Natural killer cell (primary cell): ENCODE measurements at regions of chr7 and their contacts with region 1.

Region 1: DNA sequence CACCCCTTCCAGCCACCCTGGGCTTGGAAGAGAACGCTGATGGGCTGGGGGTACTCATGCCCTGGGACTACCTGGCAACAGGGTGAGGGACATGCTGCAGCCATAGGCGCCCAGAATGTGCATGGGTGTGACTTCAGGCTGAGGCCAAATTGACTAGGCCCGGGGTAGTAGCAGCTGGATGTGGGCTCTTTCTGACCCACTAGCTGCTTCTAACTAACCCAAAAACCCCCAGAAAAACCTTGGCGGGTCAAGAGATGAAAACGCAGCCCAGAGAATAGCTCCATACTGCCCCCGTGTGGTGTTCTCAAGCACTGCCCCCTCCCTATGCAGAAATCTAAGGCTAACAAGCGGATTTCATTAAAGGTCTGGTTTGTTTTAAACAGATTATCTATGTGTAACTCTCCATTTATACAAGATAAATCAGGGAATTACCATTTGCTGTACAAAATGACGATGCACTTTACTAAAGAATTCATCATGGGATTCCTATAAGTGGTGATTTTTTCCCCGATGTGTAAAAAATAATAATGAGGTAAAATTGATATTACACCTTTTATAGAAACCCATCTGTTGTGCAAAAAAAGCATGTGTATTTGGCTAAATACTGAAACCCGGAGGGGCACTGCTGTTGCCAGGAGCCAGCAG is 4.2 kb downstream of the SMARCD3 start:
- DNase-seq: peak; percentile 60 to 84
- ATAC-seq: peak; percentile 49 to 63 (median 55)
- H3K4me3 ChIP-seq: no peak overlapping the region
- H3K4me3 Mint-ChIP-seq: peak overlapping the region; percentile 79
- H3K27ac ChIP-seq: no peak overlapping the region
- H3K27ac Mint-ChIP-seq: peak overlapping the region; percentile 38 to 92
- H3K4me1 ChIP-seq: peaks cover 51% of the 10 kb centered on the region
- H3K4me1 Mint-ChIP-seq: peaks cover 25 to 44% of the 10 kb centered on the region in 2 donors
- H3K27me3 ChIP-seq: peaks cover 24% of the 10 kb centered on the region
- H3K27me3 Mint-ChIP-seq: peaks cover 0 to 23% of the 10 kb centered on the region in 2 donors
- CTCF ChIP-seq: peak; percentile 81

Region 2: DNA sequence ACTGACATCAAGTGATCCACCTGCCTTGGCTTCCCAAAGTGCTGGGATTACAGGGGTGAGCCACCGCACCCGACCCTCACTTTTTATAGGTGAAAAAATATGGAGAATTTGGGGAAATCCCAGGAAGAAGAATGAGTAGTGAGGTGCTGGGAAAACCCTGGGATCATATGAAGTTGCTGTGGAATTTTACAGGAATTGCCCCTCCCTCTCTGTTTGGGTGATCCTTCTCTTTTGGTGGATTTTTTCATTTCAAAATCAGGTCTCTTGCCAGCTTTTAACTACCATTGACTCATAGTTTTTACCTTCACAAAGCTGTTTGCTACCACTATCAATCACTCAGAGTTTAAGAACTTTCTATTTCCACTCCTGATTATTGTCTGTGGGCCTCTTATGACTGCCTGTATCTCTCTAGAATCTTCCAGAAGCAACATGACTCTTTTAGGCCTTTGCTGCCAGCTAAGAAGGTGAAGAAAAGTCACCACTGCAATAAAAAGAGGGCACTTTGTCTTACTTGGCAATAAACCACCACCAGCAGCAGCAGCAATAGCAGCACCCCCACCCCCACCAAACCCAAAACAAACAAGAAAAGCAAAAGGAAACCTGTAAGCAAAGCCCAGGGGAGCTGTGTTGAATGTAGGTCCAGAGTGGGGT is 797.9 kb before region 1 on chr7:
- intact Hi-C with region 1: no loop called
- DNase-seq: peak in 1 of 2 donors; percentile 28
- ATAC-seq: no peak
- H3K4me3 ChIP-seq: no peak overlapping the region
- H3K4me3 Mint-ChIP-seq: no peak overlapping the region
- H3K27ac ChIP-seq: no peak overlapping the region
- H3K27ac Mint-ChIP-seq: peak overlapping the region in 1 of 2 donors; percentile 8
- H3K4me1 ChIP-seq: peaks cover 50% of the 10 kb centered on the region
- H3K4me1 Mint-ChIP-seq: peaks cover 33 to 43% of the 10 kb centered on the region in 2 donors
- H3K27me3 ChIP-seq: no peaks in the 10 kb centered on the region
- H3K27me3 Mint-ChIP-seq: no peaks in the 10 kb centered on the region
- CTCF ChIP-seq: no peak

Region 3: DNA sequence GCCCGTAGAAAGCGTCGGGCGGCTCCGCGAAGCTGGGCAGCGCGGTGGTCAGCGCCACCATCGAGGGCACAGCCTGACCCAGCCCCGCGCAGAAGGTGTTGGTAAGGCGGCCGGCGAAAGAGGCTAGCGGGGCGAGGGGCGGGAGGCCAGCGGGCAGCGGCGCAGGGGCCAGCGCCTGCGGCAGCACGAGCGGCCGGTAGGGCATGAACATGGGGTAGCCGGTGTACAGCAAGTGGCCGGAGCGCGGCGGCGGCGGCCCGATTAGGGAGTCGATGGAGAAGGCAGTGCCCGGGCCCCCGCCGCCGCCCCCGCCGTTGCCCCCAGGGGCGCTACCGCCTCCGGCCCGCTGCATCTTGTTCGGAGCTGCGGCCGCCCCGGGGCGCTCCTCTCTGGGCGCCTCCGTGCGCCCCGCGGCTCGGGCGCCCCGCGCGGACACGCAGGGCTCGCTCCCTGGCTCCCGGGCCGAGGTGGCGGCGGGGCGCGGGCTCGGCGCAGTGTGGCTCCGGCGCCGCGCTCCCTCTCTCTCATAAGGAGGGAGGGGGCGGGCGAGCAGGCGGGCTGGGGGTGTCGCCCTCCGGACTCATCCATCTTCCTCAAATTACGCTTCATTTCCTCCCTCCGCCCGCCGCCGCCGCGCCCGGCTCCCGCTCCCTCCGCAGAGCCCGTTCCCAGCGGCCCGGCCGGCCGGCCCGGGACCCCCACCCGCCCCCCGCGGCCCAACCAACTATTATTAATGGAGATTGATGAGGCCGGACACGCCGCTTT is 76.9 kb before region 1 on chr7 and contains the start of gene GBX1:
- intact Hi-C with region 1: loop called (anchors 2 kb)
- DNase-seq: peak in 1 of 2 donors; percentile 53
- ATAC-seq: peak in 2 of 3 donors; percentile 49 to 62
- H3K4me3 ChIP-seq: no peak within 1 kb of the TSS
- H3K4me3 Mint-ChIP-seq: peak within 1 kb of the TSS; percentile 83
- H3K27ac ChIP-seq: no peak within 1 kb of the TSS
- H3K27ac Mint-ChIP-seq: peak within 1 kb of the TSS in 1 of 2 donors; percentile 14
- H3K4me1 ChIP-seq: peaks cover 13% of the 10 kb centered on the region
- H3K4me1 Mint-ChIP-seq: peaks cover 3 to 11% of the 10 kb centered on the region in 2 donors
- H3K27me3 ChIP-seq: peaks cover 40% of the 10 kb centered on the region
- H3K27me3 Mint-ChIP-seq: peaks cover 31 to 41% of the 10 kb centered on the region in 2 donors
- CTCF ChIP-seq: no peak
- total RNA-seq, gene GBX1: not detected

Region 4: GRCh38 chr7:151226875-151227782 is 17.2 kb before region 1 on chr7 and contains the start of gene ABCF2:
- intact Hi-C with region 1: loop called (anchors 1 kb)
- DNase-seq: peak; percentile 96 to 98
- ATAC-seq: peak; percentile 98 to 100 (median 99)
- H3K4me3 ChIP-seq: peak within 1 kb of the TSS; percentile 64
- H3K4me3 Mint-ChIP-seq: peak within 1 kb of the TSS; percentile 95
- H3K27ac ChIP-seq: peak within 1 kb of the TSS; percentile 61
- H3K27ac Mint-ChIP-seq: peak within 1 kb of the TSS; percentile 86 to 94
- H3K4me1 ChIP-seq: peaks cover 29% of the 10 kb centered on the region
- H3K4me1 Mint-ChIP-seq: peaks cover 29 to 36% of the 10 kb centered on the region in 2 donors
- H3K27me3 ChIP-seq: no peaks in the 10 kb centered on the region
- H3K27me3 Mint-ChIP-seq: no peaks in the 10 kb centered on the region
- CTCF ChIP-seq: no peak
- total RNA-seq, gene ABCF2: 12.1 to 26.1 (median 17.6) TPM